ENCODE measurements at regions of chr1 and their contacts with region 1.

Region 1: DNA sequence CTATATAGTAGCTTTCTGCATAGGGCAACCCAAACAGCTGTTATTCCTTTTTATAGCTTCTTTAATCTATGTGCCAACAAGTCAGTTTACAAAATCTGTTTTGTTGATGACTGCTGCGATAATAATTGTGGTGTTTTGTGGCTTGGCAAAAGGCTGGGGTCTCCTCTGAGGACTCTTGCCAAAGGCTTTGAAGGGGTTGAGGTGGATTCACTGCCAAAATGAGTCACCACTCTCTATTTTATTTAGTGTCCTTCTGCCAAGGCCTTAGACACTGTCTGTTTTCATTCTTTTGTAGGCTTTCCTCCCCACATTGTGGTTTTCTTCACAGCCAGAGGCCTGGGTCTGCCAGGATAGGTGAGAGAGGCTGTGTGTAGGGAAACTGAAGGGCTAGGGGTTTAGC is 161.8 kb downstream of the NFIA start:
- DNase-seq: no peak
- ATAC-seq: peak in 3 of 4 donors; percentile 27 to 53 (median 51)
- H3K4me3 ChIP-seq: no peak overlapping the region
- H3K27ac ChIP-seq: peak overlapping the region in 9 of 12 donors; percentile 5 to 68 (median 34)
- H3K4me1 ChIP-seq: peaks cover 0 to 69% (median 50%) of the 10 kb centered on the region in 12 donors
- H3K27me3 ChIP-seq: no peaks in the 10 kb centered on the region
- CTCF ChIP-seq: no peak
- POLR2A ChIP-seq: no peak

Region 2: DNA sequence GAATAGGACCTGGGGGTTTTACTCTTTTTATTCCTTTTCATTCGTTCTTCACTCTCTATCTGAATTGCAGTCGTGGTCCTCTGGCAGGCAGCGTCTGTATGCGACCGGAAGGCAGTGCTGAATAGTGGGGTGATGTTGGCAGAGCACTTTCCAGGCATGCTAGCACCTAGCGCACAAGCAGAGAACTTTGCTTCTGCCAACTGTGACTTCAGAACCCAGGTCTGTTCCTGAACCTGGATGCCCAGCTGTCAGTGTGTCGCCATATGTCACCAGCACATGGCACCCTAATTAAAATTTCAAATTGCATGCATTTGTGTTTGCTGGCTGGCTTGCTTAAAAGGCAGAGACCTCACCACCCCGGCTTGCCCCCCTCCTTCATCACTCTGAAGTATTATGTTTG is 45.6 kb before region 1 on chr1:
- intact Hi-C with region 1: loop called in 1 of 10 experiments (anchors 5 kb)
- DNase-seq: no peak
- ATAC-seq: peak in 3 of 4 donors; percentile 54 to 69 (median 64)
- H3K4me3 ChIP-seq: no peak overlapping the region
- H3K27ac ChIP-seq: no peak overlapping the region
- H3K4me1 ChIP-seq: peaks cover 0 to 68% (median 19%) of the 10 kb centered on the region in 12 donors
- H3K27me3 ChIP-seq: no peaks in the 10 kb centered on the region
- CTCF ChIP-seq: no peak
- POLR2A ChIP-seq: no peak